ENCODE measurements at regions of chr10 and their contacts with region 1.

Region 1: GRCh38 chr10:91298224-91298871 is 77.9 kb downstream of the PCGF5 start:
- DNase-seq: peak; percentile 83
- H3K4me3 ChIP-seq: peak overlapping the region; percentile 16 to 63 (median 33)
- H3K27ac ChIP-seq: no peak overlapping the region
- H3K4me1 ChIP-seq: peaks cover 2% of the 10 kb centered on the region
- H3K27me3 ChIP-seq: no peaks in the 10 kb centered on the region
- CTCF ChIP-seq: peak; percentile 90 to 97
- POLR2A ChIP-seq: peak; percentile 25

Region 2: GRCh38 chr10:89431977-89432376 is 1866.4 kb before region 1 on chr10:
- CTCF ChIA-PET with region 1: no interaction called
- POLR2A ChIA-PET with region 1: no interaction called
- dilution Hi-C with region 1: no loop called
- intact Hi-C with region 1: no loop called
- DNase-seq: peak; percentile 45
- H3K4me3 ChIP-seq: no peak overlapping the region
- H3K27ac ChIP-seq: no peak overlapping the region
- H3K4me1 ChIP-seq: no peaks in the 10 kb centered on the region
- H3K27me3 ChIP-seq: no peaks in the 10 kb centered on the region
- CTCF ChIP-seq: no peak
- POLR2A ChIP-seq: no peak

Region 3: GRCh38 chr10:90857635-90858460 is 440.5 kb before region 1 on chr10 and contains the start of gene HTR7:
- CTCF ChIA-PET with region 1: no interaction called
- POLR2A ChIA-PET with region 1: no interaction called
- dilution Hi-C with region 1: no loop called
- intact Hi-C with region 1: no loop called
- DNase-seq: peak; percentile 44
- H3K4me3 ChIP-seq: peak within 1 kb of the TSS; percentile 42 to 60 (median 57)
- H3K27ac ChIP-seq: no peak within 1 kb of the TSS
- H3K4me1 ChIP-seq: peaks cover 19% of the 10 kb centered on the region
- H3K27me3 ChIP-seq: peaks cover 25 to 37% of the 10 kb centered on the region in 2 experiments
- CTCF ChIP-seq: peak; percentile 45 to 56
- POLR2A ChIP-seq: no peak
- total RNA-seq, gene HTR7: 0.09 and 0.22 TPM in 2 replicates

Region 4: GRCh38 chr10:91006001-91006751 is 292.2 kb before region 1 on chr10:
- CTCF ChIA-PET with region 1: interaction called, 14 read pairs
- POLR2A ChIA-PET with region 1: no interaction called
- dilution Hi-C with region 1: no loop called
- intact Hi-C with region 1: loop called (anchors 1 kb)
- DNase-seq: peak; percentile 90
- H3K4me3 ChIP-seq: no peak overlapping the region
- H3K27ac ChIP-seq: no peak overlapping the region
- H3K4me1 ChIP-seq: no peaks in the 10 kb centered on the region
- H3K27me3 ChIP-seq: no peaks in the 10 kb centered on the region
- CTCF ChIP-seq: peak; percentile 83 to 87
- POLR2A ChIP-seq: no peak

Region 5: DNA sequence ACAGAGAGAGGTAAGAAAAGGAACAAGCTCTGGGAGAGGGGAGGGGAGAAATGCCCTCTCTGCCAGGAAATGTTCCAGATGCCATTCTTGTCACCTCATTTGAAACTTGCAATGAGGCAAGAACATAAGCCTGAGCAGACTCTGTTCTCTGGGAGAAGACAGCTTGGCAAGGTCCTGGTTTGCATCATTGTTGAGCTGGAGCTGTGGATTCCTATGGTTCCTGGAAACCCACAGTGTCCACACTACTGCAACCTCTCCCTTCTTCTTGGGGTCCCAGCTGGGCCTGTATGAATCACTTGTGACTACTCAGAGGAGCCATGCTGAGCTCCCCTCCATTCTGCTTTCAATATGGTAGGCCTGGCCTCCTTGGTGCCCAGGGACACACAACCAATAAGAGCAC is 51.0 kb after region 1 on chr10:
- CTCF ChIA-PET with region 1: interaction called, 16 read pairs
- POLR2A ChIA-PET with region 1: no interaction called
- dilution Hi-C with region 1: no loop called
- intact Hi-C with region 1: no loop called
- DNase-seq: peak; percentile 57
- H3K4me3 ChIP-seq: no peak overlapping the region
- H3K27ac ChIP-seq: peak overlapping the region; percentile 70
- H3K4me1 ChIP-seq: peaks cover 21% of the 10 kb centered on the region
- H3K27me3 ChIP-seq: no peaks in the 10 kb centered on the region
- CTCF ChIP-seq: no peak
- POLR2A ChIP-seq: no peak

Region 6: DNA sequence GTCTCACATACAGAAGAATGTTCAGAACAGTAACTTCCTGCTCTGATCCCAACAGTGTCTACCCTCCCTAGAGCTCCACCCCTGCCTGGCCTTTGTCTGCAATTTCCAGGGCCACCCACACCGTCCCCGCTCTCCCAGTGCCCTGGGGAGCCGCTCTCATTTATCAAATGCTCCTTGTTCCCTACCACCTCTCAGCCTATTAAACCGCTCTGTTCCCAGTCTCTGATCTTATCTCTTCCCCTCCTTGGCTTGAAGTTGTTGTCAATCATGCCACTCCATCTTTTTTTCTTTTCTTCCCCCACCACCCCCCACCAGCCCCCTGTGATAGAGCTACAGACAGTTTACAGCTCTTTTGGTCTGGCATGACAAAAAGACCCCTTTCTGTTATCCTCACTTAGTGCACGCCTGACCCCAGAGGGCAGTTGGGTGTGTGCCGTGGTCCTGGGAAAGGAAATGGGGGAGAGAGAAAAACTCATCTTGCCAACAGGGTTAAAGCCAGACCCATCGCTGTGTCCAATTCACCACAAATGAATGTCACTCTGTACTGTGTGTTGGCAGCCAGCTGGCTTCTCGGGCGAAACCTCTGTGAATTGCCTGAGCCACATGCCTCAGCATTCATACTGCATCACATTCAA is 83.0 kb after region 1 on chr10:
- CTCF ChIA-PET with region 1: interaction called, 51 read pairs
- POLR2A ChIA-PET with region 1: no interaction called
- dilution Hi-C with region 1: no loop called
- intact Hi-C with region 1: no loop called
- DNase-seq: no peak
- H3K4me3 ChIP-seq: no peak overlapping the region
- H3K27ac ChIP-seq: no peak overlapping the region
- H3K4me1 ChIP-seq: peaks cover 3% of the 10 kb centered on the region
- H3K27me3 ChIP-seq: peaks cover 13 to 35% of the 10 kb centered on the region in 2 experiments
- CTCF ChIP-seq: no peak
- POLR2A ChIP-seq: no peak

Region 7: GRCh38 chr10:91551856-91552255 is 253.5 kb after region 1 on chr10:
- CTCF ChIA-PET with region 1: interaction called, 78 read pairs
- POLR2A ChIA-PET with region 1: no interaction called
- dilution Hi-C with region 1: no loop called
- intact Hi-C with region 1: loop called (anchors 1 kb)
- DNase-seq: peak; percentile 78
- H3K4me3 ChIP-seq: no peak overlapping the region
- H3K27ac ChIP-seq: no peak overlapping the region
- H3K4me1 ChIP-seq: no peaks in the 10 kb centered on the region
- H3K27me3 ChIP-seq: peaks cover 0 to 1% of the 10 kb centered on the region in 2 experiments
- CTCF ChIP-seq: peak; percentile 68 to 87
- POLR2A ChIP-seq: no peak

Region 8: DNA sequence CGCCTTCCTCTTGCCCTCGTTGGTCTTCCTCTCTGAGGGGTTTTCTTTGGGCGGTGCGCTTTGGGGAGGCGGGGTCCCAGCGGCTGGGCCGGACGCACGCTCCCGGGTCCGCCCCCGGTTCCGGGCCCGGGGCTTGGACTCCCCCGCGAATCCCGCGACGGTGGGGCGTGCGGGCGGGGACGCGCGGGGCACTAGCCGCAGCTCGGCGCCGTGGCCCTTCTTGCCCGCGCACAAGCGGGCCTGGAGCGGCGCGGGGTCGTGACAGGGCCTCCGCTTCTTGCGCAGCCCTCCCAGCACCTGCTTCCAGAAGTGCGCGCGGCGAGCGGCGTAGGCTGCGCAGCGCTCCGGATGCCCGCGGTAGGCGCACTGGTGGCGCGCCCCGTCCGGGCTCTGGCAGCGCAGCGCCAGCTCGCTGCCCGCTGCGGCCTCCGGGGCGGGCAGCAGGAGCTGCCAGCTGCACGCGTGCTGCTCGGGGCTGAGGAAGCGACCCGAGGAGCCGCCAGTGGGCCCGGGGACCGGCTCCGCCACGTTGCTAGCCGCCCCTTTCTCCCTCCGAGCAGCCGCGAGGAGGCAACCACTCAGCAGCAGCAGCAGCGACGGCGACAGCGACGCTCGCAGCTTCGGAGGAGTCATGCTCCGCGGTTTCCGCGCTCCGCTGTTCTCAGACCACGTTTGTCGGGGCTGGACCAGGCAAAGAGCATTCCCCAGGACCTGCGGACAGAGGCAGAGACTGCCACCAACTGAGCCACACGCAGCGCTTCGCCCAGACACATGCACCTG is 610.2 kb after region 1 on chr10:
- CTCF ChIA-PET with region 1: interaction called, 25 read pairs
- POLR2A ChIA-PET with region 1: no interaction called
- dilution Hi-C with region 1: no loop called
- intact Hi-C with region 1: loop called (anchors 1 kb)
- DNase-seq: peak; percentile 81
- H3K4me3 ChIP-seq: peak overlapping the region; percentile 57 to 71 (median 63)
- H3K27ac ChIP-seq: no peak overlapping the region
- H3K4me1 ChIP-seq: peaks cover 18% of the 10 kb centered on the region
- H3K27me3 ChIP-seq: peaks cover 3% of the 10 kb centered on the region in 2 experiments
- CTCF ChIP-seq: peak; percentile 37 to 51
- POLR2A ChIP-seq: no peak